T-cell (primary cell): ENCODE measurements at regions of chr20 and their contacts with region 1.

Region 1: GRCh38 chr20:33401184-33401920 is at the start of gene CDK5RAP1:
- DNase-seq: peak; percentile 70 to 91 (median 81)
- ATAC-seq: peak; percentile 93 to 98 (median 96)
- H3K4me3 ChIP-seq: peak within 1 kb of the TSS; percentile 97 to 99
- H3K4me3 Mint-ChIP-seq: peak within 1 kb of the TSS; percentile 92 to 98 (median 93)
- H3K27ac ChIP-seq: peak within 1 kb of the TSS; percentile 51
- H3K27ac Mint-ChIP-seq: peak within 1 kb of the TSS; percentile 92 to 94
- H3K4me1 ChIP-seq: peaks cover 8 to 39% of the 10 kb centered on the region in 2 experiments
- H3K4me1 Mint-ChIP-seq: peaks cover 59 to 69% (median 62%) of the 10 kb centered on the region in 3 donors
- H3K27me3 ChIP-seq: no peaks in the 10 kb centered on the region
- H3K27me3 Mint-ChIP-seq: no peaks in the 10 kb centered on the region
- total RNA-seq, gene CDK5RAP1: 42.1 to 54.3 (median 49.1) TPM

Region 2: DNA sequence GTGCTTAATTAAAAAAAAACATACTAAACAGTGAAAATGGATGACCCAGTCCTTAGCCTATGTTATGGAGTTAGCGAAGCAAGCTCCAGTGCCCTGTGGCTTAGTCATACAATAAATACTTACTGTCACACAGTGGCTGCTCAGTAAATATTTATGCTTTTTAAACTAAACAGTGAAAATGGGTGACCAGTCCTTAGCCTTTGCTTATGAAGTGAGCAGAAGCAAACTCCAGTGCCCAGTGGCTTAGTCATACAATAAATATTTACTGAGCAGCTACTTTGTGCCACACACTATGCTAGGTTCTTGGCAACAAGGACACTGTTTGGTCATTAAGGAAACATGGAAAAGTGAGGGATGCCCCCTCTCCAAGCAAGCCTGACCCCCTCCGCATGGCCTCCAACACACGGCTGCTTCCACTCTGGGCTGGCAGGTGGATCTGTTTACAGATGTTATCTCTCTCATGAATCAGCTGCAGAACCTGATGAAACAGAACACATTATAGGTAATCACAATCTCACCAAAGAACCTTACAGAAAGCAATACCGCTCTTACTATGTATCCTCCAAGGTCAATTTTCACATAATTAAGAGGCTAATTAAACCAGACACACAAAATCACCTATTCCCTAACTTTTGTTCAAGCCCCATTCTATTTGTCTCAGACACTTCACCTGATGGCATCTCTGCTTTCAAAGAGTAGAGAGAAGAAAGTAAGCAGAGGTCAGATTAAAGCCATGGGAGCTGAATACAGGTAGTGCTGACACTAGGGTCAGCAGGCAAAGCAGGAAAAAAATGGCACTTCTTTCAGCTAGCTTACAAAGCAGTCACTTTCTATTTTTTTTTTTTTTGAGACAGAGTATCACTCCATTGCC is 27.4 kb before region 1 on chr20:
- CTCF ChIA-PET with region 1: interaction called in 1 of 2 experiments, 10 read pairs
- POLR2A ChIA-PET with region 1: no interaction called
- DNase-seq: no peak
- ATAC-seq: no peak
- H3K4me3 ChIP-seq: no peak overlapping the region
- H3K4me3 Mint-ChIP-seq: no peak overlapping the region
- H3K27ac ChIP-seq: peak overlapping the region; percentile 10
- H3K27ac Mint-ChIP-seq: peak overlapping the region; percentile 11 to 65
- H3K4me1 ChIP-seq: peaks cover 21 to 42% of the 10 kb centered on the region in 2 experiments
- H3K4me1 Mint-ChIP-seq: peaks cover 22 to 70% (median 54%) of the 10 kb centered on the region in 3 donors
- H3K27me3 ChIP-seq: no peaks in the 10 kb centered on the region
- H3K27me3 Mint-ChIP-seq: no peaks in the 10 kb centered on the region